ENCODE measurements at regions of chr15 and their contacts with region 1.

Region 1: GRCh38 chr15:66630801-66631351 is 65.1 kb upstream of the LCTL start:
- DNase-seq: no peak
- ATAC-seq: peak; percentile 11 to 38 (median 24)
- H3K4me3 ChIP-seq: no peak overlapping the region
- H3K27ac ChIP-seq: peak overlapping the region in 7 of 12 donors; percentile 28 to 57 (median 32)
- H3K4me1 ChIP-seq: peaks cover 0 to 29% (median 9%) of the 10 kb centered on the region in 12 donors
- H3K27me3 ChIP-seq: no peaks in the 10 kb centered on the region
- CTCF ChIP-seq: no peak
- POLR2A ChIP-seq: no peak

Region 2: DNA sequence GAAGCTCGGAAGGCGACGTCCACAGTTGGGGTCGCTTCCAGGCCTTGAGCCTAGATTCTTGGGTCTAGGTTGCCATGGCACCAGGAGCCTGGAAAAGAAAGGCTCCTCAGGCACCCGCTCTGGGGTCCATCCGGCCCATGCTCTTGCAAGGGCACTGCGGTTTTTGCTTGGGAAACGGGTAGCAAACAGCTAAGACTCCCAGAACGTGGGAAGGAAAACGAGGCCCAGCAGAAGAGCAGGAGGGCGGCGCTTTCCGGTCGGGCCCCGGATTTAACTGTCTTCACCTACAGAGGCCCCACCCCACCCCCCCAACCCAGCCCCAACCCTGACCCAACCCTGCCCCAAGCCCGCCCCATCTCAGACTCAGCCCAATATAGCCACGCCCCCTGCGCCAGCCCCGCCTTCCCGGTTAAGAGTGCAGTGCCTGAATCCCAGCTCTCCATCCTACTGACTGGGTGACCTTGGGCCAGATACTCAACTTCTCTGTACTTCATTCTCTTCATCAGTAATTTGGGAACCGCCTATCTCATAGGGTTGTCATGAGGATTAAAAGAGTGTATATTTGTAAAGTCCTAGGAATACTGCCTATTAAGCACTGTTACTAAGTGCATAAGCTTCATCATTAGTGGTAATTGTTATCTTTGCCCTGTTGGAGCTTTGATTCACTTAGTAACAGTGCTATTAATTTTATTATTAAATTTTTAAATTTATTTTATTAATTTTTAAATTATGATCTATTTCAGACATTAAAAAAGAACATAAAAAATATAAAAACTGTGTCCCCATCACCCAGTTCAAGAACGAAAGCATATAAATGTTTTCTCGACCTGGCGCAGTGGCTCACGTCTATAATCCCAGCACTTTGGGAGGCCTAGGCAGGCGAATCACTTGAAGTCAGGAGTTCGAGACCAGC is 42.8 kb after region 1 on chr15:
- intact Hi-C with region 1: loop called in 1 of 10 experiments (anchors 5 kb)
- DNase-seq: peak in 3 of 5 donors; percentile 24 to 74 (median 40)
- ATAC-seq: peak in 3 of 4 donors; percentile 38 to 45 (median 39)
- H3K4me3 ChIP-seq: no peak overlapping the region
- H3K27ac ChIP-seq: no peak overlapping the region
- H3K4me1 ChIP-seq: peaks cover 0 to 18% (median 2%) of the 10 kb centered on the region in 12 donors
- H3K27me3 ChIP-seq: no peaks in the 10 kb centered on the region
- CTCF ChIP-seq: no peak
- POLR2A ChIP-seq: no peak

Region 3: GRCh38 chr15:66679657-66680108 is 48.8 kb after region 1 on chr15:
- intact Hi-C with region 1: loop called in 2 of 10 experiments (anchors 5 kb)
- DNase-seq: peak in 4 of 5 donors; percentile 56 to 74 (median 72)
- ATAC-seq: peak; percentile 91 to 96 (median 92)
- H3K4me3 ChIP-seq: no peak overlapping the region
- H3K27ac ChIP-seq: peak overlapping the region; percentile 42 to 93 (median 72)
- H3K4me1 ChIP-seq: peaks cover 0 to 22% (median 14%) of the 10 kb centered on the region in 12 donors
- H3K27me3 ChIP-seq: no peaks in the 10 kb centered on the region
- CTCF ChIP-seq: no peak
- POLR2A ChIP-seq: peak in 1 of 2 donors; percentile 30

Region 4: GRCh38 chr15:66761726-66762589 is 131.1 kb after region 1 on chr15:
- intact Hi-C with region 1: no loop called
- DNase-seq: peak in 1 of 5 donors; percentile 8
- ATAC-seq: no peak
- H3K4me3 ChIP-seq: no peak overlapping the region
- H3K27ac ChIP-seq: peak overlapping the region; percentile 33 to 96 (median 82)
- H3K4me1 ChIP-seq: peaks cover 13 to 98% (median 75%) of the 10 kb centered on the region in 12 donors
- H3K27me3 ChIP-seq: peaks cover 0 to 5% (median 0%) of the 10 kb centered on the region in 9 donors
- CTCF ChIP-seq: no peak
- POLR2A ChIP-seq: no peak